ENCODE measurements at regions of chr7 and their contacts with region 1.

Region 1: GRCh38 chr7:78264105-78264504 is 465.5 kb downstream of the PHTF2 start:
- DNase-seq: no peak
- ATAC-seq: no peak
- H3K4me3 ChIP-seq: no peak overlapping the region
- H3K27ac ChIP-seq: no peak overlapping the region
- H3K4me1 ChIP-seq: no peaks in the 10 kb centered on the region; the same call in 1 of the 2 replicates
- H3K27me3 ChIP-seq: no peaks in the 10 kb centered on the region
- CTCF ChIP-seq: no peak
- POLR2A ChIP-seq: no peak
- RAD21 ChIP-seq: no peak

Region 2: GRCh38 chr7:78232806-78233205 is 31.3 kb before region 1 on chr7:
- CTCF ChIA-PET with region 1: no interaction called
- POLR2A ChIA-PET with region 1: no interaction called
- dilution Hi-C with region 1: no loop called
- in situ Hi-C with region 1: no loop called
- intact Hi-C with region 1: loop called (anchors 1 kb)
- DNase-seq: peak; percentile 69
- ATAC-seq: peak; percentile 86
- H3K4me3 ChIP-seq: no peak overlapping the region
- H3K27ac ChIP-seq: no peak overlapping the region
- H3K4me1 ChIP-seq: no peaks in the 10 kb centered on the region
- H3K27me3 ChIP-seq: no peaks in the 10 kb centered on the region
- CTCF ChIP-seq: no peak
- POLR2A ChIP-seq: no peak
- RAD21 ChIP-seq: no peak

Measured in IMR-90 (cell line).